ENCODE measurements at regions of chr9 and their contacts with region 1.

Region 1: GRCh38 chr9:36407122-36407723 is 7.2 kb upstream of the RNF38 start:
- DNase-seq: peak; percentile 70
- ATAC-seq: peak; percentile 93
- H3K4me3 Mint-ChIP-seq: no peak overlapping the region
- H3K27ac Mint-ChIP-seq: peak overlapping the region; percentile 69
- H3K4me1 Mint-ChIP-seq: peaks cover 19% of the 10 kb centered on the region
- H3K27me3 Mint-ChIP-seq: no peaks in the 10 kb centered on the region
- CTCF ChIP-seq: peak; percentile 93

Region 2: DNA sequence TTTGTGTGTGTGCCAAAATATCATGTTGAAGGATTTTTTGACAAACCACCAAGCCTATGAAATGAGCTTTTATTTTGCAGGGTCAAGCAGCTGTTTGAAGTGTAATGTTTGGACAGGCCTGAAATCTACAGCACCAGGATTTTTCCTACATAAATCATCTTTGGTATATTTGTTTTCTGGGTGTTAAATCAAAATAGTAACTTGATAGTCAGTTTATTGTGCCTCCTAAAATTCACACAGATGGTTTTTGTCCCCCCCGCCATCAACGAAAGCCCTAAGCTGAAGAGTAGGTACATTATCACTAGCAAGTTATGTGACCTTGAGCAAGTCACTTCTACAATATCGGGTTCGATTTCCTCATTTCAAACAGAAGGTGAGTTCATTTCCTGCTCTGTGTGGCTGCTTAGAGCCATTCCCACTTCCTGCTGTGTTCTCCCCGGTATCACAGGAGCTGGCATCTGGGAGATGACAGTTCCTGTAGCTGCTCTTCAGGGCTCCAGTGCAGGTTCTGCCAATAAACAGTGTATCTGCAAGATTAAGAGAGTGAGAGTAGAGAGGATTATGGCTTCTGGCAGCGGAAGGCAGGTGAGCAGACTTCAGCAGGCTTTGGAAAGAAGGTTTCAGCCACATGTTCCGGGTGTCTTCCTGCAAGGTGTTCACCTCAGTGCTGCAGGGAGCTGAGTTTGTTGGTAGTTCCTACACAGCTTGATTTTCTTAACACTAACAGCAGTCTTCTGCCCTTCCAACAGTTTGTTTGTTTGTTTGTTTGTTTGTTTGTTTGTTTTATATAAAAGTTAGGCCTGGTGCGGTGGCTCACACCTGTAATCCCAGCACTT is 100.5 kb before region 1 on chr9:
- CTCF ChIA-PET with region 1: no interaction called
- POLR2A ChIA-PET with region 1: no interaction called
- intact Hi-C with region 1: no loop called
- DNase-seq: peak; percentile 7
- ATAC-seq: no peak
- H3K4me3 Mint-ChIP-seq: no peak overlapping the region
- H3K27ac Mint-ChIP-seq: peak overlapping the region; percentile 72
- H3K4me1 Mint-ChIP-seq: peaks cover 8% of the 10 kb centered on the region
- H3K27me3 Mint-ChIP-seq: no peaks in the 10 kb centered on the region
- CTCF ChIP-seq: no peak

Region 3: DNA sequence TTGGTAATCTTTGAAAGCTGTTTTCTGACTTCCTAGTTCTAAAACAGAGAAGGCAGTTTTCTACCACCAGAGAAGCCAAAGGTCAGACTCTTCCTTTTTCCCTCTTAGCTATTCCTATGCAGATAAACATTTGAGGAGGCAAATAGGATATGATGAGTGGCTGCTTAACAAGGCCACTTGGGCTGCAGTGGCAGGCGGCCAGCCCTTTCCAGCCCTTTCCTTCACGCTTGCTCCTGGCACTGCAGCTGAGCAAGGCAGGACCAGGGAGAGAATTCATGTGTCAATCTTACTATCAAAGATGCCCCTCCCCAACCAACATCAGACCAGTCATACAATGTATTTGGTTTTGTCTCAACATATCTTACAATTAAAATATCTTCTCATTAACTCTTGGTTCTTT is 29.7 kb after region 1 on chr9:
- CTCF ChIA-PET with region 1: interaction called, 84 read pairs
- POLR2A ChIA-PET with region 1: interaction called, 4 read pairs
- intact Hi-C with region 1: no loop called
- DNase-seq: no peak
- ATAC-seq: no peak
- H3K4me3 Mint-ChIP-seq: no peak overlapping the region
- H3K27ac Mint-ChIP-seq: peak overlapping the region; percentile 53
- H3K4me1 Mint-ChIP-seq: peaks cover 33% of the 10 kb centered on the region
- H3K27me3 Mint-ChIP-seq: no peaks in the 10 kb centered on the region
- CTCF ChIP-seq: no peak

Region 4: GRCh38 chr9:36461323-36461722 is 54.1 kb after region 1 on chr9:
- CTCF ChIA-PET with region 1: interaction called, 34 read pairs
- POLR2A ChIA-PET with region 1: interaction called, 5 read pairs
- intact Hi-C with region 1: no loop called
- DNase-seq: no peak
- ATAC-seq: no peak
- H3K4me3 Mint-ChIP-seq: no peak overlapping the region
- H3K27ac Mint-ChIP-seq: peak overlapping the region; percentile 47
- H3K4me1 Mint-ChIP-seq: peaks cover 50% of the 10 kb centered on the region
- H3K27me3 Mint-ChIP-seq: no peaks in the 10 kb centered on the region
- CTCF ChIP-seq: no peak

Region 5: DNA sequence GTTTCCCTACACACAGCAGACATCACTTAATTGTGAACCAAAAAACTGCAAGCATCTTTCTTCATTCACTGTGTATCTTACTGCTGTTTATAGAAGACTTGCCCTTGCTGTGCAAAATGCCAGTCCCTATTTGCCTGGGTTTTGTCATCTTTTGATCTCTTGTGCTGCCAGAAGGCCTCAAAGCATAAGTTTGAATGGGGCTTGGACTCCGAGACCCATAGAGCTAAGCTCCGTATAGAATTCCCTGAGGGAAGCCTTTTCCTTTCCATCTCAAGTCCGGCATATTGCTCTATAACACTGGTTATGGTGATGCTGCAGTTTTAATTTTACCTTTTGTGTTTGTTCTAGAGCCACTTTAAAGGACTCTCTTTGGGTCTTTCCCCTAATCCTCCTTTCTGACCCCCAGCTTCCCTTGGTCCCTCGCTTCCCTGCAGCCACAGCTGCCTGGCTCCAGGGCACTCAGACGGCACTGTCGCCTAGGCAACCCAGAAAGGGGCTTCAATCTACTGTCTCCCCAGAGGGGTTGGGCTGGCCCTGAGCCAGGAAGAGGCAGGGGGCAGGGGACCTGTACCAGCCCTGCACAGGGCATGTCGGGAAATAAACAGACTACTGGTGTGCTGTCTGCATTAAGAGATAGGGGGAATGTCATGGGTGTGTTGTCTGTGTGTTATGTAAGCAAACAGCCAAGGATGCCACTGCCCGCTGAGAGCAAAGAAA is 92.1 kb after region 1 on chr9:
- CTCF ChIA-PET with region 1: interaction called, 10 read pairs
- POLR2A ChIA-PET with region 1: no interaction called
- intact Hi-C with region 1: no loop called
- DNase-seq: no peak
- ATAC-seq: no peak
- H3K4me3 Mint-ChIP-seq: no peak overlapping the region
- H3K27ac Mint-ChIP-seq: no peak overlapping the region
- H3K4me1 Mint-ChIP-seq: peaks cover 29% of the 10 kb centered on the region
- H3K27me3 Mint-ChIP-seq: no peaks in the 10 kb centered on the region
- CTCF ChIP-seq: no peak

Region 6: GRCh38 chr9:36551129-36551528 is 143.9 kb after region 1 on chr9:
- CTCF ChIA-PET with region 1: interaction called, 296 read pairs
- POLR2A ChIA-PET with region 1: no interaction called
- intact Hi-C with region 1: loop called (anchors 1 kb)
- DNase-seq: no peak
- ATAC-seq: no peak
- H3K4me3 Mint-ChIP-seq: no peak overlapping the region
- H3K27ac Mint-ChIP-seq: no peak overlapping the region
- H3K4me1 Mint-ChIP-seq: peaks cover 1% of the 10 kb centered on the region
- H3K27me3 Mint-ChIP-seq: no peaks in the 10 kb centered on the region
- CTCF ChIP-seq: no peak

Region 7: GRCh38 chr9:36728651-36729520 is 321.7 kb after region 1 on chr9:
- CTCF ChIA-PET with region 1: interaction called, 29 read pairs
- POLR2A ChIA-PET with region 1: no interaction called
- intact Hi-C with region 1: no loop called
- DNase-seq: peak; percentile 80
- ATAC-seq: peak; percentile 72
- H3K4me3 Mint-ChIP-seq: no peak overlapping the region
- H3K27ac Mint-ChIP-seq: no peak overlapping the region
- H3K4me1 Mint-ChIP-seq: no peaks in the 10 kb centered on the region
- H3K27me3 Mint-ChIP-seq: no peaks in the 10 kb centered on the region
- CTCF ChIP-seq: peak; percentile 99

Measured in activated CD8-positive, alpha-beta T cell treated with anti-CD3 and anti-CD28 coated beads for 36 hours (primary cell).